H1 (cell line): ENCODE measurements at regions of chr4 and their contacts with region 1.

Region 1: GRCh38 chr4:41281038-41281634 is 24.4 kb downstream of the UCHL1 start:
- DNase-seq: no peak
- H3K4me3 ChIP-seq: no peak overlapping the region
- H3K27ac ChIP-seq: no peak overlapping the region
- H3K4me1 ChIP-seq: no peaks in the 10 kb centered on the region
- H3K27me3 ChIP-seq: no peaks in the 10 kb centered on the region
- CTCF ChIP-seq: peak in 2 of 3 experiments; percentile 84 to 91; a peak in 3 of 4 replicates
- EP300 ChIP-seq: no peak
- POLR2A ChIP-seq: no peak
- RAD21 ChIP-seq: peak; percentile 100

Region 2: GRCh38 chr4:41268022-41268421 is 13.1 kb before region 1 on chr4:
- CTCF ChIA-PET with region 1: interaction called, 4 read pairs
- POLR2A ChIA-PET with region 1: interaction called, 18 read pairs
- DNase-seq: no peak
- H3K4me3 ChIP-seq: no peak overlapping the region
- H3K27ac ChIP-seq: 0 out of 2 replicates have a peak overlapping the region, but pooled peaks have one; percentile 19
- H3K4me1 ChIP-seq: no peaks in the 10 kb centered on the region
- H3K27me3 ChIP-seq: no peaks in the 10 kb centered on the region
- CTCF ChIP-seq: no peak
- EP300 ChIP-seq: no peak
- POLR2A ChIP-seq: 0 out of 3 replicates have a peak, but pooled peaks of 1 of the 2 experiments have one; percentile 32
- RAD21 ChIP-seq: no peak

Region 3: GRCh38 chr4:41294445-41295062 is 13.4 kb after region 1 on chr4:
- CTCF ChIA-PET with region 1: interaction called, 17 read pairs
- POLR2A ChIA-PET with region 1: no interaction called
- DNase-seq: no peak
- H3K4me3 ChIP-seq: no peak overlapping the region
- H3K27ac ChIP-seq: no peak overlapping the region
- H3K4me1 ChIP-seq: no peaks in the 10 kb centered on the region
- H3K27me3 ChIP-seq: no peaks in the 10 kb centered on the region
- CTCF ChIP-seq: no peak
- EP300 ChIP-seq: no peak
- POLR2A ChIP-seq: no peak
- RAD21 ChIP-seq: no peak

Region 4: GRCh38 chr4:41360214-41360920 is 79.2 kb after region 1 on chr4:
- CTCF ChIA-PET with region 1: interaction called, 28 read pairs
- POLR2A ChIA-PET with region 1: interaction called, 3 read pairs
- DNase-seq: peak in 1 of 2 experiments; percentile 68
- H3K4me3 ChIP-seq: peak overlapping the region; percentile 60 to 75 (median 63)
- H3K27ac ChIP-seq: no peak overlapping the region
- H3K4me1 ChIP-seq: peaks cover 15 to 32% (median 22%) of the 10 kb centered on the region in 4 experiments
- H3K27me3 ChIP-seq: peaks cover 36 to 70% (median 64%) of the 10 kb centered on the region in 4 experiments
- CTCF ChIP-seq: no peak
- EP300 ChIP-seq: no peak
- POLR2A ChIP-seq: no peak
- RAD21 ChIP-seq: no peak

Region 5: GRCh38 chr4:41661442-41662076 is 380.4 kb after region 1 on chr4:
- CTCF ChIA-PET with region 1: interaction called, 107 read pairs
- POLR2A ChIA-PET with region 1: interaction called, 3 read pairs
- DNase-seq: peak in 1 of 2 experiments; percentile 78
- H3K4me3 ChIP-seq: no peak overlapping the region
- H3K27ac ChIP-seq: no peak overlapping the region
- H3K4me1 ChIP-seq: no peaks in the 10 kb centered on the region
- H3K27me3 ChIP-seq: no peaks in the 10 kb centered on the region
- CTCF ChIP-seq: peak; percentile 74 to 85 (median 80)
- EP300 ChIP-seq: no peak
- POLR2A ChIP-seq: no peak
- RAD21 ChIP-seq: peak; percentile 91 to 92

Region 6: DNA sequence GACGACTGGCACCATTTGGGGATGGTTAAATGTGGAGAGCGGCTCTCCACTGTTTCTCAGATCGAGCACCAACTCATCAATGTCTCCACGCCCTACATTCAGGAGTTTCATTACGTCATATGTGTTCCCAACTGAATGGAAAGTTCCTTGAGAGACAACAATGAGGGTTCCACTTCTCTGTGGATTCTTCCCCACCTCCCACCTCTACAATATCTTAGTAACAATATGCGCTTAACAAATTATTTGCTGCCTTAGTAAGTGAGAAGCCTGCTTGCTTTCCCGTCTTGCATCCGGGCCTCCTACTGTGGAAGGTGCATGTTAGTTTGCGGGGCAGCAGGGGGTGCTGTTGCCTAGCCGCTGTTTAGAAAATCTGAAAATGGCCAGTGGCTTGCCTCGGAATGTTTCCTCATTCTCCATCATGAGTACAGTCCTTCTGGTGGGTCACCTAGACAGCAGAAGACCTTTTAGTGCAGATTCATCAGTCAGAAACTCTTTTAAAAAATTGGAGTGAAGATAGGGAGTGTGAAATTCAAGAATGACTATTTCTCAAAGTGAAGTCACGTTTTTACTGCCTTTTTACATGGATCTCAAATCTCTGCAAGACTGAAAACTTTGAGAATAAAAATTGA is 411.7 kb after region 1 on chr4:
- CTCF ChIA-PET with region 1: interaction called, 17 read pairs
- POLR2A ChIA-PET with region 1: no interaction called
- DNase-seq: peak; percentile 25 to 72
- H3K4me3 ChIP-seq: peak overlapping the region in 1 of 4 experiments; percentile 19; a peak in 1 of 8 replicates
- H3K27ac ChIP-seq: no peak overlapping the region
- H3K4me1 ChIP-seq: no peaks in the 10 kb centered on the region
- H3K27me3 ChIP-seq: no peaks in the 10 kb centered on the region
- CTCF ChIP-seq: peak; percentile 86 to 92 (median 88)
- EP300 ChIP-seq: no peak
- POLR2A ChIP-seq: no peak
- RAD21 ChIP-seq: peak; percentile 96 to 97

Region 7: DNA sequence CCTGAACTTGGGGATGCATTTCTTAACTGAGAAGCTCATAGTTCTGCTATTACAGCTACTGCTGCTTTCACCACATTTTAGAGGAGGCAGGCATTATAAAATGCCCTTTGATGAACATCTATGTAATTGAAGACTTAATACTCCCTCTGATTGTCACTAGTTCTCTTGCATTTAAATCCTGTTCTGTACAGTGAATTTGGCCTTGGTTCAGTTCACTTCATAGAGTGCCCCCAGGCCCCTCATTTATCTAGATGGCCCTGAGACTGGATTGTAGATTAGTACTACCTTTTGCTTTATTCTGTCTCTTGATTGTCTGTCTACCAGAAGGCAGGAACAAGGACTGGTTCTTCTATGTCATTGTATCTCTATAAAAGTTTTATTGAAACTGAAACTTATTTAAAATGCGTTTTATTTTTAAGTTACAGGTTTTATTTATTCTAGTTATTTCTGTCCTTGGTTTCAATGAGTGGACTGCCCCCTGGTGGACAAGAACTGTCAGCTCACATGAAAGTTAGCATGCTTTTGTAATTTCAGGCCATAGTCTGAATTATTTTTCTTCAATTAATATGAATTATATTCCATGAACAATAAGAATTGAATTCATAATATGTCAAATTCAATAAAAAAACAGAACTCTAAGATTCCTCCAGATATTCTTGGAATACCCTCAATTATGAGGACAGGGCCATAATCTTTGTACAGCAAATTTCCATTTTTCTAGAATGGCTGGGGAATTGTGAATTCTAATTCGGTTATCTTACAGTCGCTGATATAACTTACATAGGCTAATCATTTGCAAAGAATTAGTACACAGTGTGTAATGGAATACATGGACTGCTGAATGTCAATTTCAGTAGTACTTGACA is 606.9 kb after region 1 on chr4:
- CTCF ChIA-PET with region 1: interaction called, 15 read pairs
- POLR2A ChIA-PET with region 1: no interaction called
- DNase-seq: no peak
- H3K4me3 ChIP-seq: no peak overlapping the region
- H3K27ac ChIP-seq: no peak overlapping the region
- H3K4me1 ChIP-seq: no peaks in the 10 kb centered on the region
- H3K27me3 ChIP-seq: peaks cover 3 to 17% (median 16%) of the 10 kb centered on the region in 4 experiments
- CTCF ChIP-seq: peak in 2 of 3 experiments; percentile 63 to 69; a peak in 3 of 4 replicates
- EP300 ChIP-seq: no peak
- POLR2A ChIP-seq: no peak
- RAD21 ChIP-seq: peak; percentile 79 to 80